ENCODE measurements at regions of chr6 and their contacts with region 1.

Region 1: DNA sequence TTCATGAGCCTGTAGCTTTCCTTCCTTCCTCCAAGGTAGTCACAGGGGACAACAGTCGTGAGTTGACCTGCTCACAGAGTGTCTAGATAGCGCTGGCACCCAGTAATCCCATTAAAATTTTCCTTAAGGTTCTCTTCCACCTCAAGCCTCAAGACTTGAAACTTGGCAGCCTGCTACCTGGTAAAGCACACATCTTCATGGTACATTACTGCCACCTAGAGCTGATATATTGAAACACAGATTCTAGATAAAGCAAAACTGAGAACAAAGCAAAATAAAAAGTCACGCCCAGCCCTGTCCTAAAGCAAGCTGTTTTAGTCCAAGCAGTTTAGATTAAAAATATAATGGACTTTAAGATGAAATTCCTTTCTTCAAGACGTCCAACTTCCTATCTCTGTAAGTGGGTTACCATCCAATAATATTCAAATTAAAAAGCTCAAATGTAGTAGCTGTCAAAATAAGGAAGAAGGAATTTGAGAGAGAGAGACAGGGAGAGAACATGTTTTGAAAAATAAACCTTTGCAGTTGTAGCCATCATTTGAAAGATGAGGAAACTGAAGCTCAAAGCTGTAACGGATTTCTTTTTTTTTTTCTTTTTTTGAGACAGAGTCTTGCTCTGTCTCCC is 50.7 kb upstream of the CD83 start:
- DNase-seq: peak; percentile 84
- H3K4me3 ChIP-seq: no peak overlapping the region
- CTCF ChIP-seq: peak; percentile 59

Region 2: GRCh38 chr6:13908955-13909381 is 157.9 kb before region 1 on chr6:
- in situ Hi-C with region 1: loop called (anchors 25 kb)
- DNase-seq: peak; percentile 73
- H3K4me3 ChIP-seq: no peak overlapping the region
- CTCF ChIP-seq: peak; percentile 67

Region 3: DNA sequence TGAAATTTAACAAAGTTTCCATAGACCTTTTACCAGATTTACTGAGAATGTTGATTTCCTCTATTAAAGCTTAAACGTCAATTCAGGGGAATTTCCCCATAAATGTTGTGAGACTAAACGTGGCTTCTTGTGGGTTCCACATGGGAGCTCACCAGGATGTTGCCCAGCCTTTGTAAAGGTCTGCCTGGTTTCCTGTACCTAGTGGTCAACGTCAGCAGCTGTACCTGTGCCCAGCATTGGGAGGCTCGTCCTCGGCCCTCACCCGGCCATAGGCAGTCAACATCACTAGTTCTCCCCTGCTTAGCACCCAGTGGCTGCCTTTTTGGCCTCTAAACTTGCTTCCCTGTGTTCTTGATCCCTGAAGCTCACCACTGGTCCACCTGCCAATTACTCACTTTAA is 28.5 kb after region 1 on chr6:
- in situ Hi-C with region 1: no loop called
- DNase-seq: no peak
- H3K4me3 ChIP-seq: no peak overlapping the region
- CTCF ChIP-seq: no peak